Endothelial cell of umbilical vein (primary cell): ENCODE measurements at regions of chr18 and their contacts with region 1.

Region 1: DNA sequence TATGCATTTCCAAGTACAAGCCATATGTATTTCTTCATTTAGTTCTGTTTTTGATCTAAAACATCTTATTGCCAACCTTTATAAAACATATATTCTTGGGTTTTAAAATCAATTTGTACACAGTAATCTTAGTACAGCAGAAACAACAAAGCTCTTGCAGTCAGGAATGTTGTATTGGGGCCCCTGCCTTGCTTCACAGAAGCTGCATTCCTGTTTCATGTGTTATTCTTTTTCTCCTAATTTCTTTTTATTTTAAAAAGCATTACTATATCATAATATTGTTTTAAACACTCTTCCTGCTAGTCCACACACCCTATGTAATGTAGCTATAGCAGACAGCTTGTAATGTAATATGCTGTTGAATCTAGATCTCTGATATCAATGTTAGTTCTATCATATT is 24.0 kb downstream of the SERPINB7 start:
- DNase-seq: no peak
- H3K4me3 ChIP-seq: no peak overlapping the region
- H3K27ac ChIP-seq: no peak overlapping the region
- H3K4me1 ChIP-seq: no peaks in the 10 kb centered on the region
- H3K27me3 ChIP-seq: no peaks in the 10 kb centered on the region
- CTCF ChIP-seq: no peak
- POLR2A ChIP-seq: no peak

Region 2: DNA sequence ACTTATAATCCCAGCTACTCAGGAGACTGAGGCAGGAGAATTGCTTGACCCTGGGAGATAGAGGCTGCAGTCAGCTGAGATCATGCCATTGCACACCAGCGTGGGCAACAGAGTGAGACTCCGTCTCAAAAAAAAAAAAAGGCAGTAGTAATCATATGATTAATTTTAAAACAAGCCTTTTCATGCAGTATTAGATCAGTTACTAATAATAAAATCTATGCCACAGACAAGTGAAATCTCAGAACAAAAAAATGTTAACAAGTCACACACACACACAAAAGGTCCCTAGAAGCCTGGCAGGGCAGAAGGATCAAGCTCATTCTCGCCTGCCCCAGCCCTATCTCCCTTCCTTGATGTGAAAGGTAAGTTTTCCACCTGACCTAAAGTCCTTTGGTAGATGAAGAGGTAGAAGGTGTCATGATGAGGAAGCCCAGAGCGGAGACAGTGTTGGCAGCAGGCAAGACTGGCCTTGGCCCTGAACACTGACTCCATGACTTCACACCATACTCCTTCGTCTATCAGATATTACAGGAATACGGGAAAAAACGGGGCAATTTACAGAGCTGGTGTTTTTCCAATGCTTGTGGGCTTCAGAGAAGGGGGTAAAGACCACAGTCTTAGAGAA is 442.8 kb before region 1 on chr18:
- CTCF ChIA-PET with region 1: no interaction called
- POLR2A ChIA-PET with region 1: no interaction called
- dilution Hi-C with region 1: no loop called
- intact Hi-C with region 1: no loop called
- DNase-seq: no peak
- H3K4me3 ChIP-seq: no peak overlapping the region
- H3K27ac ChIP-seq: no peak overlapping the region
- H3K4me1 ChIP-seq: no peaks in the 10 kb centered on the region
- H3K27me3 ChIP-seq: no peaks in the 10 kb centered on the region
- CTCF ChIP-seq: no peak
- POLR2A ChIP-seq: no peak

Region 3: GRCh38 chr18:63487676-63488075 is 311.5 kb before region 1 on chr18:
- CTCF ChIA-PET with region 1: no interaction called
- POLR2A ChIA-PET with region 1: no interaction called
- dilution Hi-C with region 1: no loop called
- intact Hi-C with region 1: no loop called
- DNase-seq: no peak
- H3K4me3 ChIP-seq: no peak overlapping the region
- H3K27ac ChIP-seq: no peak overlapping the region
- H3K4me1 ChIP-seq: no peaks in the 10 kb centered on the region
- H3K27me3 ChIP-seq: peaks cover 3 to 7% of the 10 kb centered on the region in 2 experiments
- CTCF ChIP-seq: no peak
- POLR2A ChIP-seq: no peak

Region 4: DNA sequence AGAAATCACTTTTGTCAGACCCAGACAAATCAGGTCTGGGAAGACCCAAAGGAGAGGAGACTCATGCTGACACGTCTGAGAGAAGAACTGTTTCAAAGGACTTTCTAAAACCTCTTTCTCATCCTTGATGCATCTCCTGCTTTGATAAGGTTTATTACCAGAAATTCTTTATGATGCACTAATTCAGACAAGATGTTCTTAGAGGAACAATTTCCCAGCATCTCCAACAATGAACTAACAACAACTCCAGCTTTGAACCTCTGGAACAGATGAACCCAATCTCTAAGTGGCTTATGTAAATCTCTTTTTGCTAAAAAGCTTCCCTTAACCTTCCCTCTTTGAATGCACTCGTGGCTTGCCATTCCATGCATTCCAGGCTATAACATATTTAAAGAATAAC is 112.3 kb before region 1 on chr18:
- CTCF ChIA-PET with region 1: no interaction called
- POLR2A ChIA-PET with region 1: no interaction called
- dilution Hi-C with region 1: no loop called
- intact Hi-C with region 1: no loop called
- DNase-seq: no peak
- H3K4me3 ChIP-seq: no peak overlapping the region
- H3K27ac ChIP-seq: no peak overlapping the region
- H3K4me1 ChIP-seq: no peaks in the 10 kb centered on the region
- H3K27me3 ChIP-seq: no peaks in the 10 kb centered on the region
- CTCF ChIP-seq: no peak
- POLR2A ChIP-seq: no peak

Region 5: DNA sequence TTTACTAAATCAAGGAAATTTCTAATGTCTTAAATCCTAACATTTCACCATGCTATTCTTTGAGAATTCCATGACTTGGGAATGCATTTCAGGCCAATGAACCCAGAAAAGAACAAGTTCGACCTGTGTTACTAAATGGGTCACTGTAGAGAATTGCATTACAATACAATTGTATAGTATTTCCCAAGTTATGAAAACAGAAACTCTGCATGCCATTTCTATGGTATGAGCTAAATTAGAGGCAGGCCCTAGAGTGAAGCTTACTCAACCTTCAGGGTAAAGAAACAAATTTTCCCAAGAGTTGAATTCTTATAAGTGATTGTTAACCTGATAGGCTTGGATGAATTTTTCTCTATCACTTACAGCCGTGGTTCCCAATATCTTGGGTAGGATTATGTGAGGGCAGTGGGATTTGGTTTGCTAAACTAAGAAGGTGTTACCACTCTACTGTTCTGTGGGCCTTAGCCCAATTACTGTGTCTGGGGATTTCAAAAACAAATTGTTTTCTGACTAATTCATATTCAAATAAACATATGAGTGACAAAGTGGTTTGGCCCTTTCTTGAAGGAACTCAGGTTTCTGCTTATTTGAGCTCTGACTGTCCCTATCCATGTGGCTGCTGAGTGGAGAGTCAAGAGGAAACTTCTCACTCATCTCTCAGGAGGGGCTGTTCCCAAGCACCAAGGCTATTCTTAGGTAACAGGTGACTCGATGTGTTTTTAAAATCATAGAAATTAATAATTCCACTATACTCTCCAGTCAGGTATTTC is 35.2 kb before region 1 on chr18:
- CTCF ChIA-PET with region 1: no interaction called
- POLR2A ChIA-PET with region 1: no interaction called
- dilution Hi-C with region 1: no loop called
- intact Hi-C with region 1: loop called (anchors 2 kb)
- DNase-seq: no peak
- H3K4me3 ChIP-seq: no peak overlapping the region
- H3K27ac ChIP-seq: no peak overlapping the region
- H3K4me1 ChIP-seq: no peaks in the 10 kb centered on the region
- H3K27me3 ChIP-seq: no peaks in the 10 kb centered on the region
- CTCF ChIP-seq: no peak
- POLR2A ChIP-seq: no peak